Head of caudate nucleus (tissue), 42 donors: ENCODE measurements at regions of chr4 and their contacts with region 1.

Region 1: GRCh38 chr4:158850800-158851644 is 82.2 kb downstream of the FNIP2 start:
- DNase-seq: peak in 1 of 42 donors; percentile 37

Region 2: GRCh38 chr4:158624889-158625478 is 226.0 kb before region 1 on chr4:
- intact Hi-C with region 1: no loop called
- DNase-seq: peak in 16 of 42 donors; percentile 13 to 55 (median 24)

Region 3: GRCh38 chr4:158768555-158769174 is 82.4 kb before region 1 on chr4 and contains the start of gene FNIP2:
- intact Hi-C with region 1: loop called (anchors 5 kb)
- DNase-seq: peak; percentile 55 to 95 (median 86)

Region 4: GRCh38 chr4:158929939-158930638 is 79.1 kb after region 1 on chr4:
- intact Hi-C with region 1: no loop called
- DNase-seq: no peak